B cell (primary cell): ENCODE measurements at regions of chr19 and their contacts with region 1.

Region 1: DNA sequence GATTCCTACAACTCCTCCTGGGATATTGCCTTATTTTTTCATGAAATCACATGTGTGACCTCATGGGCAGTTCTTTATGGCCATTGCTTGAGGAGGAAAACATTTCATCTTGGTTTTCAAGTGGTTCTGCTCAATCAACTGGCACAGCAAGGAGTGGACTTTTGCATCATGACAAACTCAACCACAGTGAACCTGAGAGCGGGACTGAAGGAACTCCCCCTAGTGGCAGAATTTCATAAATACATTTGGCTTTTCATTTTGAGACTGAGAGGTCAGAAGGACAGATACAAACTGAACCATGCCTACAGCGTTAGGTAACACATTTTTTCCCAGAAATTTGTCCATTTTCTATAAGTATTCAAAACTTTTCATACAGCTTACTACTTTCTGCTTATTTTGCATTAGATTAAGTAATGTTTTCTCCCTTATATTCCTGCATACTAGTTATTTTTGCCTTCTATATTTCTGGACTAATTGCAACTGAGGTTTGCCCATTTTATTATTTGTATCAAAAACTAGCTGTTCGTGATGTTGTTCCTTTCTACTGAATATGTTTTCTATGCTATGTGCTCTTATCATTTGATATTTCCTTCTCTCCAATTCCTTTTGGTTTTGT is 13.4 kb upstream of the SIGLEC12 start:
- DNase-seq: peak; percentile 74
- ATAC-seq: peak; percentile 56
- H3K4me3 ChIP-seq: no peak overlapping the region
- H3K4me3 Mint-ChIP-seq: no peak overlapping the region
- H3K27ac ChIP-seq: no peak overlapping the region
- H3K27ac Mint-ChIP-seq: no peak overlapping the region
- H3K4me1 ChIP-seq: peaks cover 6 to 7% of the 10 kb centered on the region in 2 donors
- H3K4me1 Mint-ChIP-seq: peaks cover 7% of the 10 kb centered on the region
- H3K27me3 ChIP-seq: peaks cover 0 to 4% (median 0%) of the 10 kb centered on the region in 4 experiments
- H3K27me3 Mint-ChIP-seq: peaks cover 5% of the 10 kb centered on the region
- CTCF ChIP-seq: peak; percentile 89

Region 2: DNA sequence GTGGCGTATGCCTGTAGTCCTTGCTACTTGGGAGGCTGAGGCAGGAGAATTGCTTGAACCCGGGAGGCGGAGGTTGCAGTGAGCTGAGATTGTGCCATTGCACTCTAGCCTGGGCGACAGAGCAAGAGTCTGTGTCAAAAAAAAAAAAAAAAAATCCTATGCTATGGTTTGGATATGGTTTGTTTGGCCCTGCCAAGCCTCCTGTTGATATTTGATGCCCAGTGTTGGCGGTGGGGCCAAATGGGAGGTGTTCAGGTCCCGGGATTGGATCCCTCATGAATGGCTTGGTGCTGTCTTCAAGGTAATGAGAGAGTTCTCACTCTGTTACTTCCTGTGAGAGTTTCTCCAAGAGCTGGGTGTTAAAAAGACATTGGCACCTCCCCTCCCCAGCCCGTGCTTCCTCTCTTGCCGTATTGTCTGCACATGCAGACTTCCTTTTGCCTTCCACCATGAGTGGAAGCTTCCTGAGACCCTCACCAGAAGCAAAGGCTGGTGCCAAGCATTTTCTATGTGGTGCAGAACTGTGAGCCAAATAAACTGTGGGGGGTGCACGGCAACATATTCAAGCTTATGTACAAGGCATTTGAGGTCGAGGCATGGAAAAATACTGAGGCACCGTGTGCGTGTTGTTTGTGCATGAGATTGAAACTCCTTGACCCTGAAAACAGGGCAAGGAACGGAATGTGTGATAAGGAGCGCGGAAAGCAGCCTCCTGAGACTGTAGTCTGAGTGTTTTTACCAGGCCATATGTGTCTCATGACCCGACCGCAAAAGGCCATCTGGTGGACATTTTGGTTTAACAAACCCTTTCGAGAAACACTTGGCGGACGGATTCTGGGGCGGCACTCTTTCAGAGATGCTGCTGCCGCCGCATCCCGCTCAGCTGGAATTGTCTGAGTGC is 382.9 kb before region 1 on chr19:
- CTCF ChIA-PET with region 1: no interaction called
- POLR2A ChIA-PET with region 1: no interaction called
- intact Hi-C with region 1: no loop called
- DNase-seq: no peak
- ATAC-seq: no peak
- H3K4me3 ChIP-seq: no peak overlapping the region
- H3K4me3 Mint-ChIP-seq: no peak overlapping the region
- H3K27ac ChIP-seq: no peak overlapping the region
- H3K27ac Mint-ChIP-seq: no peak overlapping the region
- H3K4me1 ChIP-seq: peaks cover 0 to 4% of the 10 kb centered on the region in 2 donors
- H3K4me1 Mint-ChIP-seq: peaks cover 3% of the 10 kb centered on the region
- H3K27me3 ChIP-seq: peaks cover 0 to 26% (median 4%) of the 10 kb centered on the region in 4 experiments
- H3K27me3 Mint-ChIP-seq: peaks cover 52% of the 10 kb centered on the region
- CTCF ChIP-seq: no peak

Region 3: GRCh38 chr19:51525686-51526085 is 10.7 kb after region 1 on chr19:
- CTCF ChIA-PET with region 1: interaction called, 27 read pairs
- POLR2A ChIA-PET with region 1: no interaction called
- intact Hi-C with region 1: no loop called
- DNase-seq: no peak
- ATAC-seq: no peak
- H3K4me3 ChIP-seq: no peak overlapping the region
- H3K4me3 Mint-ChIP-seq: no peak overlapping the region
- H3K27ac ChIP-seq: no peak overlapping the region
- H3K27ac Mint-ChIP-seq: peak overlapping the region; percentile 77
- H3K4me1 ChIP-seq: peaks cover 14 to 44% of the 10 kb centered on the region in 2 donors
- H3K4me1 Mint-ChIP-seq: peaks cover 78% of the 10 kb centered on the region
- H3K27me3 ChIP-seq: no peaks in the 10 kb centered on the region
- H3K27me3 Mint-ChIP-seq: no peaks in the 10 kb centered on the region
- CTCF ChIP-seq: no peak

Region 4: DNA sequence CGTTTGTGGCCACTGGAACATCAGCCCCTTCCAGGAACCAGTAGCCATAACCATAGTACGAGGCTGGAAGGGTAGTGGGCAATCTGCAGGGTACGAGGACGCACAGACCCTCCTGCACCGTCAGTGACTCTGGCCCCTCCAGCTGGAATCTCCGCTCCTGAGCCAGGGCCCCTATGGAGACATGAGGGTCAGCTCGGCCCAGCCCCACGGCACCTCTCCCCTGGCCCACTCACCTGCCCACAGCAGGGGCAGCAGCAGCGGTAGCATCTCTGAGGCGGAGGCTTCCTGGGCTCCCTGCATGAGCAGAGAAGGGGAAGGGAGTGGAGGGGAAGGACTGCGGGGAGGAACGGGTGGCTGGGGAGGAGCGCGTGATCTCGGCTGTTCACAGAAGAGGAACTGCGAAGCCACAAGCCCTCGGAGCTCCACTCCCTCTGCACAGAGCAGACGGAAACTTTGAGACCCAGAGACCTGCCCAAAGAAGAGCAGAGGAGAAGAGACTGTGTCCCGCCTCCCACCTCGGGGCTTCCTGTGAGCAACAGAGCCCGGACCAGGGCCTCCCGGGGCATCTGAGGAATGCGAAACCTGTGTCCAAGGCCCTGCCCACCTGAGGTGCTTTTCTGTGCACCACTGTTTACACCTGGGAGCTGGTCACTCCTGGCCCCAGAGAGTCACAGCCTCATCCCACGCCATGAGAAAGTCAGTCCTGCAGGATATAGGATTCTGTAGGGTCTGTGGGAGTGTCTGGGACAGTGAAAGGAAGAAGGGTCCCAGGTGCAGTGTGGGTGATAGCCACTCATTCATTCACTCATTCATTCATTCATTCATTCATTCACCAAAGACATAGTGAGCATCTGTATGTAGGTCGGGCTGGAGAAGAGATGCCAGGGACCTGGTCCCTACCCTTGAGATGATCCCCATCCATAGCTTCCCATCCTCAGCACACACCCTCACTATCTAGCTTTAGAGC is 16.7 kb after region 1 on chr19 and contains the start of gene SIGLEC6:
- CTCF ChIA-PET with region 1: interaction called, 27 read pairs
- POLR2A ChIA-PET with region 1: no interaction called
- intact Hi-C with region 1: no loop called
- DNase-seq: peak; percentile 88
- ATAC-seq: peak; percentile 96
- H3K4me3 ChIP-seq: peak within 1 kb of the TSS in 4 of 5 experiments; percentile 51 to 60 (median 56)
- H3K4me3 Mint-ChIP-seq: peak within 1 kb of the TSS; percentile 88
- H3K27ac ChIP-seq: peak within 1 kb of the TSS; percentile 32 to 33
- H3K27ac Mint-ChIP-seq: peak within 1 kb of the TSS; percentile 83
- H3K4me1 ChIP-seq: peaks cover 25 to 41% of the 10 kb centered on the region in 2 donors
- H3K4me1 Mint-ChIP-seq: peaks cover 78% of the 10 kb centered on the region
- H3K27me3 ChIP-seq: no peaks in the 10 kb centered on the region
- H3K27me3 Mint-ChIP-seq: no peaks in the 10 kb centered on the region
- CTCF ChIP-seq: no peak
- total RNA-seq, gene SIGLEC6: 21.2 and 28.9 TPM in 2 replicates

Region 5: DNA sequence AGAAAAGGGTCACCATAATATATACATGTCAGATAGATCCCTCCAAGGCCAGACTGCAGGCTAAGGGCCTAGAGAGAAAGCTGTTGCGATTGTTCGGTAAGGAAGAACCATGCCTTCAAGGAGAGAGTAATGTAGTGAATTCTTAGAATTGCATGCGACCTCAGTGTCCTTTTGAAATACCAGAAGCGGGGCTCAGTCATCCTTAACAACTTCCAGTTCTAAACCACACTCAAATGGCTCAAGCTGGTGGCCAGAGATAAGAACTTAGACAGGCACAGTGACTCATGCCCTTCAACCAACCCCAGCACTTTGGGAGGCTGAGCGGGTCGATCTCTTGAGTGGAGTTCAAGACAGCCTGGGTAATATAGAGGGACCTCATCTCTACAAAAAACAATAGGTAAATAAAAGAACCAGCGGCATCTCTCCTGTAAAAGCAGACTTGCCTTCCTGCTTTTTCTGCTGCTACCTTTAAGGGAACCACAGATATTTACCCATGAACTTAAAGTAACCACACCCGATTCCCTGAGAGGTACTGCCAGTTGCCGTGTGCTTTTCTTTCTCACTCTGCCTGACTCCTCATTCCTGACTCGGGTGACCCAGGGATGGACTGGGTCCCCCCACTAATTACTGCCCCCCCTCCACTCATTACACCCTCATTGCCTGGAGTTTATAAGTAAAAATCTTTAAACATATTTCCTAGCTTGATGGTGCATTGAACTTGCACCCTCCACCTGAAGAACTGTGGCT is 31.8 kb after region 1 on chr19:
- CTCF ChIA-PET with region 1: interaction called, 10 read pairs
- POLR2A ChIA-PET with region 1: no interaction called
- intact Hi-C with region 1: no loop called
- DNase-seq: no peak
- ATAC-seq: no peak
- H3K4me3 ChIP-seq: peak overlapping the region in 3 of 5 experiments; percentile 7 to 47 (median 11)
- H3K4me3 Mint-ChIP-seq: peak overlapping the region; percentile 83
- H3K27ac ChIP-seq: peak overlapping the region; percentile 43 to 77
- H3K27ac Mint-ChIP-seq: peak overlapping the region; percentile 97
- H3K4me1 ChIP-seq: peaks cover 49 to 77% of the 10 kb centered on the region in 2 donors
- H3K4me1 Mint-ChIP-seq: peaks cover 85% of the 10 kb centered on the region
- H3K27me3 ChIP-seq: no peaks in the 10 kb centered on the region
- H3K27me3 Mint-ChIP-seq: no peaks in the 10 kb centered on the region
- CTCF ChIP-seq: no peak

Region 6: GRCh38 chr19:51564791-51565190 is 49.8 kb after region 1 on chr19:
- CTCF ChIA-PET with region 1: interaction called, 11 read pairs
- POLR2A ChIA-PET with region 1: no interaction called
- intact Hi-C with region 1: no loop called
- DNase-seq: peak; percentile 57
- ATAC-seq: peak; percentile 54
- H3K4me3 ChIP-seq: peak overlapping the region in 1 of 5 experiments; percentile 20
- H3K4me3 Mint-ChIP-seq: peak overlapping the region; percentile 29
- H3K27ac ChIP-seq: no peak overlapping the region
- H3K27ac Mint-ChIP-seq: peak overlapping the region; percentile 32
- H3K4me1 ChIP-seq: peaks cover 20 to 22% of the 10 kb centered on the region in 2 donors
- H3K4me1 Mint-ChIP-seq: peaks cover 24% of the 10 kb centered on the region
- H3K27me3 ChIP-seq: no peaks in the 10 kb centered on the region
- H3K27me3 Mint-ChIP-seq: no peaks in the 10 kb centered on the region
- CTCF ChIP-seq: no peak

Region 7: GRCh38 chr19:51621178-51621577 is 106.2 kb after region 1 on chr19:
- CTCF ChIA-PET with region 1: interaction called, 18 read pairs
- POLR2A ChIA-PET with region 1: no interaction called
- intact Hi-C with region 1: no loop called
- DNase-seq: peak; percentile 66
- ATAC-seq: peak; percentile 73
- H3K4me3 ChIP-seq: no peak overlapping the region
- H3K4me3 Mint-ChIP-seq: no peak overlapping the region
- H3K27ac ChIP-seq: peak overlapping the region in 1 of 2 donors; percentile 56
- H3K27ac Mint-ChIP-seq: peak overlapping the region; percentile 59
- H3K4me1 ChIP-seq: peaks cover 12 to 22% of the 10 kb centered on the region in 2 donors
- H3K4me1 Mint-ChIP-seq: peaks cover 23% of the 10 kb centered on the region
- H3K27me3 ChIP-seq: no peaks in the 10 kb centered on the region
- H3K27me3 Mint-ChIP-seq: no peaks in the 10 kb centered on the region
- CTCF ChIP-seq: no peak

Region 8: DNA sequence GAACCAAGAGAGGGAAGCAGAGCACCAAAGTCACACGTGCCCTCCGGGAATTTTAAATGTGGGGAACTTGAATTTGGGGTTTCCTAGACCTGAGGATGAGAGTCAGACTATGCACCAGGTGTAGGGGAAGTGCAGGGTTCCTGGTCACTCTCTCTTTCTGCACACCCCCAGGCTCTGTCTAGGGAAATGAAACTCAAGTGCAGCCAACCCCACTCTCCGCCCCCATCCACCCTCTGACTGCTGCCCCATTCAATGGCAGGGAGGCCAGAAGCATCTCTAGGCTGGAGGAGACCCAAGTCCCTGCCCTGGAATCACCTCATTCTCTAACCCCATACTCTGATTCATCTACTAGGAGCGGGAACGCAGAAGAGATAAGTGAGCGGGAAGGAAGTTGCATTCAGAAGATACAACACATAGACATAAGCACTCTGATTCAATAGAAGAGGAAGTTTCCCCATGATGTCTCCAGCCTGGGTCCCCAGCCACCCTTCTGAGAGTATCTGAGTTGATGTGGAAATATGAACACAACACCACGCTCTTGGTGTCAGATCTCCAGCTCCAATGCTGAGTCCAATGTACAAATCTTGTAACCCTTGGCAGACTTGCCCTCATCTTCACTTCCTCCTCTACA is 136.4 kb after region 1 on chr19:
- CTCF ChIA-PET with region 1: interaction called, 102 read pairs
- POLR2A ChIA-PET with region 1: no interaction called
- intact Hi-C with region 1: loop called (anchors 2 kb)
- DNase-seq: peak; percentile 85
- ATAC-seq: peak; percentile 94
- H3K4me3 ChIP-seq: peak overlapping the region in 1 of 5 experiments; percentile 12
- H3K4me3 Mint-ChIP-seq: peak overlapping the region; percentile 73
- H3K27ac ChIP-seq: peak overlapping the region; percentile 70 to 87
- H3K27ac Mint-ChIP-seq: peak overlapping the region; percentile 87
- H3K4me1 ChIP-seq: peaks cover 43 to 50% of the 10 kb centered on the region in 2 donors
- H3K4me1 Mint-ChIP-seq: peaks cover 68% of the 10 kb centered on the region
- H3K27me3 ChIP-seq: no peaks in the 10 kb centered on the region
- H3K27me3 Mint-ChIP-seq: no peaks in the 10 kb centered on the region
- CTCF ChIP-seq: no peak